H1 (cell line): ENCODE measurements at regions of chr3 and their contacts with region 1.

Region 1: DNA sequence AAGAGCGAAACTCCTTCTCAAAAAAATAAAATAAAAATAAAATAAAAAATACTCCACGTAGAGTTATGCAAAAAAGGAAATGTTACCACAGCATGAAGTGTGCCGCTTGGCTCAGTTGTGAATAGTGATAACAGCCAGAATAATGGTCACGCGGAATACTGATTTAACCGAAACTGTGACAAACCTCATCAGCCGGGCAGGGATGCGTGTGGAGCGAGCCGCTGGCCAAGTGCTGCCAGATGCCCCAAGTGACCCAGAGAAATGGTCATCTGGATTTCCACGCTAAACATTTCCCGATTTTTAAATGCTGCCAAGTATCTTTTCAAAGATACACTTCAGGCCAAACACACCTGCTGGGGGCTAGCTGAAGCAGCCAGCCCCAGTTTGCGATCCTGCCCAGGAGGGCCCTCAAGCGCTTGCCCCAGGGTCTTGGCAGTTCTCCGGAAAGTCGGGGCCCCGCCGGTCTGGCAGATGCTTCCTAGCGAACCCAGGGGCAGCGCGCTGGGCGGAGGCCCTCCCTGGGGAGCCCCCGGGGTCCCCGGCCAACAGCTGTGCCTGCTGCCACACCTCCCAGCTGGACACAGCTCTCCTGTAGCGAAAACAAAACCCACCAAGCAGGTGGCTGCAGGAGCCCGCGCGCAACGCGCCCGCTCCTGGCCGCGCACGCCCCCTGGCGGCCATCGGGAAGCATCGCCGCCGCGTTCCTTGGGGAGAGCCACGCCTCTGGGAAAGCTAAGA is 35.1 kb downstream of the CMTM6 start:
- DNase-seq: peak in 1 of 2 experiments; percentile 95
- H3K4me3 ChIP-seq: peak overlapping the region in 2 of 4 experiments; percentile 19 to 46; a peak in 3 of 8 replicates
- H3K27ac ChIP-seq: no peak overlapping the region
- H3K4me1 ChIP-seq: peaks cover 0 to 7% (median 1%) of the 10 kb centered on the region in 4 experiments; a peak in 2 of 7 replicates
- H3K27me3 ChIP-seq: no peaks in the 10 kb centered on the region
- CTCF ChIP-seq: peak; percentile 93 to 98 (median 96)
- EP300 ChIP-seq: peak in 1 of 2 experiments; percentile 60; a peak in 1 of 3 replicates
- POLR2A ChIP-seq: no peak
- RAD21 ChIP-seq: peak; percentile 91 to 97

Region 2: GRCh38 chr3:32120471-32120870 is 347.0 kb before region 1 on chr3:
- CTCF ChIA-PET with region 1: no interaction called
- POLR2A ChIA-PET with region 1: no interaction called
- DNase-seq: no peak
- H3K4me3 ChIP-seq: no peak overlapping the region
- H3K27ac ChIP-seq: no peak overlapping the region
- H3K4me1 ChIP-seq: 0 out of 7 replicates have a peak, but pooled peaks cover 0 to 2% (median 0%) of the 10 kb centered on the region in 4 experiments
- H3K27me3 ChIP-seq: no peaks in the 10 kb centered on the region
- CTCF ChIP-seq: no peak
- EP300 ChIP-seq: no peak
- POLR2A ChIP-seq: no peak
- RAD21 ChIP-seq: no peak

Region 3: DNA sequence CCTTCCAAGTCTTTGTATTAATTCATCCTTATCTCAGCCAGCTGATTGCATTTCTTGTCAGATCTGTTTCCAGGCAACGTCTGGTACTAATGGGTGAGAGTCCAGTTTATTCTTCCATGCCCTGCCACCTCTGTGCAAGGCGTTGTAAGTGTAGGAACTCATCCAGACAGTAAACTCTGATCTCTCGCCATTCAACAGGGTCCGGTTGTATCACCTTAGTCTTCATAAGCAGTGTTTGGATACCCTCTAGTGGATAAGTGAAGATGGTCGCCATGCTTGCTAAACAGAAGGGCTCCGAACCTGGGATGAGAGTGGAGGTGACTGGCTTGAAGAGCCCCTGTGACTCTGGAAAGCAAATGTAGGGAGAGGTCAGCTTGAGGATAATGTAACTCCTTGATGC is 127.5 kb before region 1 on chr3:
- CTCF ChIA-PET with region 1: interaction called, 11 read pairs
- POLR2A ChIA-PET with region 1: no interaction called
- DNase-seq: no peak
- H3K4me3 ChIP-seq: no peak overlapping the region
- H3K27ac ChIP-seq: no peak overlapping the region
- H3K4me1 ChIP-seq: no peaks in the 10 kb centered on the region; a peak in 1 of 7 replicates
- H3K27me3 ChIP-seq: no peaks in the 10 kb centered on the region
- CTCF ChIP-seq: peak; percentile 32 to 77 (median 68)
- EP300 ChIP-seq: no peak
- POLR2A ChIP-seq: no peak
- RAD21 ChIP-seq: peak; percentile 90 to 91

Region 4: GRCh38 chr3:32355751-32356291 is 111.7 kb before region 1 on chr3:
- CTCF ChIA-PET with region 1: no interaction called
- POLR2A ChIA-PET with region 1: no interaction called
- DNase-seq: no peak
- H3K4me3 ChIP-seq: no peak overlapping the region
- H3K27ac ChIP-seq: no peak overlapping the region
- H3K4me1 ChIP-seq: peaks cover 0 to 15% (median 4%) of the 10 kb centered on the region in 4 experiments; a peak in 5 of 7 replicates
- H3K27me3 ChIP-seq: no peaks in the 10 kb centered on the region
- CTCF ChIP-seq: no peak
- EP300 ChIP-seq: no peak
- POLR2A ChIP-seq: no peak
- RAD21 ChIP-seq: no peak

Region 5: DNA sequence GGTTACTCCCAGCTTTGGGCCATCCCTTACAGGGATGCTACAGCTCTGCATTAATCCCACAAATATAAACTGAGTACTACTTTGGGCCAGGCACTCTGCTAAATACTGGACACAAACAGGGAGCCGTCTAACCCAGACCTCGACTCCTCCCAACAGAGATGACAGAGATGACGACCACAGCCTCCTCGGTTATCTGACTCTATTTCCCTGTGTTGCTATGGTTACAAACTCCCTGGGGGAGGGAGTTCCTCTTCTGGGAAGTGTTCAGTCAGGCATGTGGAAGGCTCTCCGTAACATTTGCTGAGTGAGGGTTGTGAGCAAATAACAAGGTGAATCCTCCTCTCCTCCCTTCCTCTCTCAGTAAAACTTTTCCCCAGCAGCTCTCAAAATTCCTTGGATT is 82.6 kb before region 1 on chr3:
- CTCF ChIA-PET with region 1: interaction called, 20 read pairs
- POLR2A ChIA-PET with region 1: no interaction called
- DNase-seq: no peak
- H3K4me3 ChIP-seq: no peak overlapping the region
- H3K27ac ChIP-seq: no peak overlapping the region
- H3K4me1 ChIP-seq: no peaks in the 10 kb centered on the region
- H3K27me3 ChIP-seq: 0 out of 7 replicates have a peak, but pooled peaks cover 0 to 1% (median 0%) of the 10 kb centered on the region in 4 experiments
- CTCF ChIP-seq: no peak
- EP300 ChIP-seq: no peak
- POLR2A ChIP-seq: no peak
- RAD21 ChIP-seq: no peak

Region 6: GRCh38 chr3:32410367-32411246 is 56.9 kb before region 1 on chr3:
- CTCF ChIA-PET with region 1: interaction called, 47 read pairs
- POLR2A ChIA-PET with region 1: interaction called, 3 read pairs
- DNase-seq: no peak
- H3K4me3 ChIP-seq: no peak overlapping the region
- H3K27ac ChIP-seq: no peak overlapping the region
- H3K4me1 ChIP-seq: peaks cover 5 to 37% (median 21%) of the 10 kb centered on the region in 4 experiments; a peak in 6 of 7 replicates
- H3K27me3 ChIP-seq: no peaks in the 10 kb centered on the region
- CTCF ChIP-seq: no peak
- EP300 ChIP-seq: no peak
- POLR2A ChIP-seq: no peak
- RAD21 ChIP-seq: no peak

Region 7: GRCh38 chr3:32428092-32429068 is 39.1 kb before region 1 on chr3:
- CTCF ChIA-PET with region 1: interaction called, 14 read pairs
- POLR2A ChIA-PET with region 1: no interaction called
- DNase-seq: peak in 1 of 2 experiments; percentile 43
- H3K4me3 ChIP-seq: no peak overlapping the region
- H3K27ac ChIP-seq: no peak overlapping the region
- H3K4me1 ChIP-seq: 0 out of 7 replicates have a peak, but pooled peaks cover 0 to 3% (median 0%) of the 10 kb centered on the region in 4 experiments
- H3K27me3 ChIP-seq: no peaks in the 10 kb centered on the region
- CTCF ChIP-seq: no peak
- EP300 ChIP-seq: no peak
- POLR2A ChIP-seq: no peak
- RAD21 ChIP-seq: no peak

Region 8: DNA sequence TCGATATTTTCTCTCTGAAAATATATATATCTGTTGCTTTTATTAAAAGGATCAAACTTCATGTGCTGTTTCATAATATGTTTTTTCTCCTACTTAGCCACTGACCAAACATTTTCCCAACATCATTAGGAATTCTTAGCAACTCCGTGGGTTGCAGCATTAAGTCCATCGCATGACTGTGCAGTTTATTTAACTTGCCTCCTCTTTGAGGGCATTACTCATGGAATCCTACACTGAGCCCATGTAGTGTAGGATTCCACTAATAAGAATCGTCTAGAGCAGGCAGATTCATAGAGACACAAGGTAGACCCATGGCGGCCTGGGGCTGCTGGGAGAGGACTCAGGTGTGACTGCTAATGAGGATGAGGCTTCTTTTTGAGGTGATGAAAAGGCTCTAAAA is 14.2 kb before region 1 on chr3:
- CTCF ChIA-PET with region 1: interaction called, 32 read pairs
- POLR2A ChIA-PET with region 1: no interaction called
- DNase-seq: no peak
- H3K4me3 ChIP-seq: no peak overlapping the region
- H3K27ac ChIP-seq: no peak overlapping the region
- H3K4me1 ChIP-seq: peaks cover 0 to 13% (median 8%) of the 10 kb centered on the region in 4 experiments; a peak in 4 of 7 replicates
- H3K27me3 ChIP-seq: no peaks in the 10 kb centered on the region
- CTCF ChIP-seq: no peak
- EP300 ChIP-seq: no peak
- POLR2A ChIP-seq: no peak
- RAD21 ChIP-seq: no peak

Region 9: DNA sequence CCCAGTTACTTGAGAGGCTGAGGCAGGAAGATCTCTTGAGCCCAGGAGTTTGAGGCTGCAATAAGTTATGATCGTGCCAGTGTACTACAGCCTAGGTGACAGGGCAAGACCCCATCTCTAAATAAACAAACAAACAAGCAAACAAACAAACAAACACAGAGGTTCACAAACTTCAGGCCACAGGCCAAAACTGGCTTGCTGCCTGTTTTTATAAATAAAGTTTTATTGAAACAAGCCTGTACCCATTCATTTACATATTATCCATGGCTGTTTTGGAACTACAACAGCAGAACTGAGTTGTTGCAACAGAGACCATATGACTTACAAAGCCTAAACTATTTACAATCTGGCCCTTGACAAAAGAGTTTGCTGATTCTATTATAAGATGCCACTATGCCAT is 96.7 kb after region 1 on chr3:
- CTCF ChIA-PET with region 1: no interaction called
- POLR2A ChIA-PET with region 1: no interaction called
- DNase-seq: no peak
- H3K4me3 ChIP-seq: no peak overlapping the region
- H3K27ac ChIP-seq: no peak overlapping the region
- H3K4me1 ChIP-seq: peaks cover 0 to 4% (median 0%) of the 10 kb centered on the region in 4 experiments; a peak in 2 of 7 replicates
- H3K27me3 ChIP-seq: no peaks in the 10 kb centered on the region
- CTCF ChIP-seq: no peak
- EP300 ChIP-seq: no peak
- POLR2A ChIP-seq: no peak
- RAD21 ChIP-seq: no peak